Ascending aorta (tissue), 2 donors: ENCODE measurements at regions of chr17 and their contacts with region 1.

Region 1: DNA sequence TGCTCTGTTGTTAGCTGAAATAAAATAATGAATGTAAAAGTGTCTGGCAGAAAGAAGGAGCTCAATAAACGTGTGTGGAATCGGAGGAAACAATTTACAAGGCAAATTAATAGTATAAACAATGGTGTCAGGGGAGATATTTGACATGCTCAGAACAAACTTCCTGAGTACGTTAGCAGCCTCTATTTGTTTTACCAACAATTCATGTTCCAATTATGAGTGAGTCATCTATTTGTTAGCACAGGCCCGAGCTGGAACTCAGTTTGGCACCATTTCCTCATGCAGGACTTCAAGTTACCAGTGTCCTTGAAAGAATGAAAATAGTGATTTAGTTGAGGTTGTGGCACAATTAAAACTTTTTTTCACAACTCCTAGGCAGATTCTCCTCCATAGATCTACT is 9.1 kb downstream of the ASIC2 start:
- DNase-seq: peak in 1 of 2 donors; percentile 73
- H3K4me3 ChIP-seq: no peak overlapping the region
- H3K27ac ChIP-seq: peak overlapping the region in 1 of 2 donors; percentile 20
- H3K4me1 ChIP-seq: peaks cover 0 to 4% of the 10 kb centered on the region in 2 donors
- H3K27me3 ChIP-seq: no peaks in the 10 kb centered on the region
- CTCF ChIP-seq: no peak

Region 2: GRCh38 chr17:33234930-33235685 is 48.9 kb before region 1 on chr17:
- intact Hi-C with region 1: loop called (anchors 5 kb)
- DNase-seq: peak; percentile 73 to 90
- H3K4me3 ChIP-seq: no peak overlapping the region
- H3K27ac ChIP-seq: peak overlapping the region; percentile 36 to 59
- H3K4me1 ChIP-seq: peaks cover 5 to 12% of the 10 kb centered on the region in 2 donors
- H3K27me3 ChIP-seq: no peaks in the 10 kb centered on the region
- CTCF ChIP-seq: no peak

Region 3: DNA sequence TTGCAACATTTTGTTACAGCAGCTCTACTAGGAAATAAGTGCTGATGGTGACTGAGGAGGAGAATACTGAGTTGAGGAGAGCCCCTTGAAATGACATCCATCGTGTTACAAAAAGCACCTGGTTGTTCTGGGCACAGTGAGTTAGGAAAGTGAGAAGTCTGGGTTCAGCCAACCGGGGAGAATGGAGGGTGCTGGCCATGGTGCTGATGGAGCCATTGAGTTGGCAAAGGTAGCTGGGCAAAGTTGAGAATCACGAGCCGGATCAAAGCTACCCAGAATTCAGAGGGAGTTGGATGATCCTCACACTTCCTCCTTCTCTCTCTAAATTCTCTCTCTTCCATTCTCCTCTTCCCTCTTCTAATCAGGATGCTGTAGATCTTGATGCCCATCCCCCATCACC is 44.1 kb after region 1 on chr17:
- intact Hi-C with region 1: no loop called
- DNase-seq: no peak
- H3K4me3 ChIP-seq: no peak overlapping the region
- H3K27ac ChIP-seq: no peak overlapping the region
- H3K4me1 ChIP-seq: no peaks in the 10 kb centered on the region
- H3K27me3 ChIP-seq: no peaks in the 10 kb centered on the region
- CTCF ChIP-seq: no peak